Aorta (tissue), 5 donors: ENCODE measurements at regions of chrX and their contacts with region 1.

Region 1: DNA sequence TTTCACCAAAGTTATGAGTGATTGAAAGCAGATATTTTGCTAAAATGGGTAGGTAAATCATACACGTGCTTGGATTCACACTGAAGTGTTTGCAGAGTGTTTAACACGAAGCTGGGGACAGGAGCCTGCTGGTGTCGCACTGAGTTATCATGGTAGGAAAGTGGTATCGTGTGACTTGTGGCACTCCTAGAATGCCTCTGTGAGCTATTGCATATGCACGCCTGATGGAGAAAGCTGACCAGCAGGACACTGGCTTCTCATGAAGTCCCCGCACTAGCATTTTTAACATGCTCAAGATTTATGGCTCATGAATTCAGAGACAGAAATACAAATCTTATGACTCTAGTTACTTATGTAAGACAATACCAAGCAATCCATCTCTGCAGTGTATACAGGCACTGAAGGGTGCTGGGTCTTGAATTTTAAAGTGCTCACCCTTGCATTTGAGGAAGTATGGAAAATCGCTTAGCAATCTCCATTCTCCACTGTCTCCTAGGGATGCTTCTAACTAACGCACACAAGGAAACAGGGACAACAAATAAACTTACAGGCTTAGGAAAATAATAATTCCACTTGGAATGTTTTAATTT is 19.8 kb downstream of the VCX3B start:
- DNase-seq: no peak
- ATAC-seq: no peak
- H3K4me3 ChIP-seq: no peak overlapping the region
- H3K27ac ChIP-seq: no peak overlapping the region
- H3K4me1 ChIP-seq: no peaks in the 10 kb centered on the region
- H3K27me3 ChIP-seq: no peaks in the 10 kb centered on the region

Region 2: GRCh38 chrX:7759830-7760229 is 724.6 kb before region 1 on chrX:
- intact Hi-C with region 1: no loop called
- DNase-seq: no peak
- ATAC-seq: no peak
- H3K4me3 ChIP-seq: no peak overlapping the region
- H3K27ac ChIP-seq: no peak overlapping the region
- H3K4me1 ChIP-seq: no peaks in the 10 kb centered on the region
- H3K27me3 ChIP-seq: no peaks in the 10 kb centered on the region

Region 3: DNA sequence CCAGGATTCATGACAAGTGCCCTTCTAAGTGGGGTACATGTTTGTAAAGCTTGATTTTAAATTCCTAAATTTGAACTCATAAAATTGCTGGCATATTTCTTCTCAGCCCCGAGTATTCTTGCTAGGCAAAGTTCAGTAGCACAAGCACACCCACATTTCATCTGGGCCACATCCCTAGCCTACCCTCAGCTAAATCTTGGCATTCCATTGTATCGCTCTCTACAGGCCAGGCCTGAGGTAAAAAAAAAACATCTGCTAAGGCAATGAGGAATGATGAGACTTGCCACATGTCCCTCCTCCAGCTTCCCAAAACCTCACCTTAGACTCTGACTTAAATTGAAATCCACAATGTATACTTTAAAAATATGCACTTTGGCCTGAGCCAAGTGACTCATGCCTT is 71.2 kb before region 1 on chrX:
- intact Hi-C with region 1: loop called in 1 of 2 experiments (anchors 10 kb)
- DNase-seq: no peak
- ATAC-seq: no peak
- H3K4me3 ChIP-seq: no peak overlapping the region
- H3K27ac ChIP-seq: no peak overlapping the region
- H3K4me1 ChIP-seq: no peaks in the 10 kb centered on the region
- H3K27me3 ChIP-seq: no peaks in the 10 kb centered on the region

Region 4: DNA sequence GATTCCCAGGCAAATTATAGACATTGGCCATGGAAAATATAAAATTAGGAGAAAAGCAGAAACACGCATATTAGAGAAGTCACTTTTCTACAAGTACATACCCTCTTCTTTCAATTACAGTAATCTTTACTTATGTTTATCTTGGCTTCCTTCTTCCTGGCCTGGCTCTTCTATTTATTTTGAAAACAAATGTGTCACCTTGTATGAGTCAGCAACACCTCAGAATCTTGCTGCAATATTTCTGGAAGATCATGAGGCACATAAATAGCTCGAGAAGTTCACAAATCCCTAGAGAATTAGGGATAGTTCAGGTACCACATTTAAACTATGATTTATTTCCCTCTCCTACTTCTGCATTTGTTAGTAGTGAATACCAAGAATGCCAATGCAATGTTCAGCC is 122.9 kb after region 1 on chrX:
- intact Hi-C with region 1: no loop called
- DNase-seq: no peak
- ATAC-seq: no peak
- H3K4me3 ChIP-seq: no peak overlapping the region
- H3K27ac ChIP-seq: no peak overlapping the region
- H3K4me1 ChIP-seq: no peaks in the 10 kb centered on the region
- H3K27me3 ChIP-seq: no peaks in the 10 kb centered on the region